Activated CD8-positive, alpha-beta T cell treated with anti-CD3 and anti-CD28 coated beads for 36 hours (primary cell): ENCODE measurements at regions of chr2 and their contacts with region 1.

Region 1: GRCh38 chr2:179020156-179020750 is 29.7 kb downstream of the CCDC141 start:
- DNase-seq: peak; percentile 75
- ATAC-seq: peak; percentile 94
- H3K4me3 Mint-ChIP-seq: no peak overlapping the region
- H3K27ac Mint-ChIP-seq: no peak overlapping the region
- H3K4me1 Mint-ChIP-seq: peaks cover 30% of the 10 kb centered on the region
- H3K27me3 Mint-ChIP-seq: no peaks in the 10 kb centered on the region
- CTCF ChIP-seq: peak; percentile 63

Region 2: GRCh38 chr2:178877874-178878273 is 142.4 kb before region 1 on chr2:
- CTCF ChIA-PET with region 1: no interaction called
- POLR2A ChIA-PET with region 1: no interaction called
- intact Hi-C with region 1: no loop called
- DNase-seq: no peak
- ATAC-seq: no peak
- H3K4me3 Mint-ChIP-seq: no peak overlapping the region
- H3K27ac Mint-ChIP-seq: no peak overlapping the region
- H3K4me1 Mint-ChIP-seq: no peaks in the 10 kb centered on the region
- H3K27me3 Mint-ChIP-seq: no peaks in the 10 kb centered on the region
- CTCF ChIP-seq: no peak

Region 3: DNA sequence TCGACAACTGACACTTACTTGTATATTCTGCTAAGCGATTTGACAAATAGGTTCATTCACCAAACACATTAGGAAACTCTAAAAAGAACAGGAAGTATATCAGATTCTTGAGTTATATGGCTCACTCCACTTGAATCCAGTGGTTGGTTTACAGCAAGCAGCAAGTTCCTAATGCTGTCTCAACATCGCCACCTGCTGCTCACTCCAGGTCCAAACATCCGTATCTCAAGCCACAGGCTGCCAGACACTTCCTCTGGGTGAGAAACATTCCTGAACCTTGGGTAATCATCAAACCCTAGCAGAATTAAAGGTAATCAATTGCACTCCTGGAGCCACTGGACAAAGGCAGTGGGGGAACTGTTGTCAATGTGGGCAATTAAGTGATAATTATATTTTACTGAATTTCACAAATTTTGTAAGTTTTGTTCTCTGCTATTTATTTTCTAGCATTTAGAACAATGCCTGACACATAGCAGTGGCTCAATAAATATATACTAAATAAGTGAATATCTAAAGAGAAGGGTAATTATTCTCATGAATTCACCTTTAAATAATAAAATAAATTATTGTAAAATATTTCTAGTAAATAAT is 105.9 kb before region 1 on chr2:
- CTCF ChIA-PET with region 1: interaction called, 36 read pairs
- POLR2A ChIA-PET with region 1: no interaction called
- intact Hi-C with region 1: no loop called
- DNase-seq: peak; percentile 89
- ATAC-seq: peak; percentile 92
- H3K4me3 Mint-ChIP-seq: no peak overlapping the region
- H3K27ac Mint-ChIP-seq: no peak overlapping the region
- H3K4me1 Mint-ChIP-seq: peaks cover 7% of the 10 kb centered on the region
- H3K27me3 Mint-ChIP-seq: no peaks in the 10 kb centered on the region
- CTCF ChIP-seq: peak; percentile 89

Region 4: DNA sequence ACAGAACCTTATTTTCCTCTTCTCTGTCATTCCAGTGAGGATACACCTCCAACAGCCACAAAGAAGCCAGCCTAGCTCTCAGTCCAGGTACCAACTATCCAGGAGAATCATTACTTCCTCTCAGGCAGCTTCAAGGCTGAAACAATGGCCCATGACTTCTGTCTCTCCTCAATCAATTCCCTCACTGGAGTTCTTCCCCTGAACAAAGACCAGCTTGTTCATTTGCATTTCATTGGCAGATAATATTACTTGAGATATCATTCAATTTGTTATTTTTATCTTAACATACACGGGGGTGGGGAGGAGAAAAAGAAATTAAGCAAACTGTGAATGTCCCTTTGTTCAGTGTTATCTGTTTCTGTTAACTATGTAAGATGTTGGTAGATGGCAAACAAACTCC is 14.3 kb before region 1 on chr2:
- CTCF ChIA-PET with region 1: interaction called, 24 read pairs
- POLR2A ChIA-PET with region 1: interaction called, 3 read pairs
- intact Hi-C with region 1: no loop called
- DNase-seq: no peak
- ATAC-seq: no peak
- H3K4me3 Mint-ChIP-seq: no peak overlapping the region
- H3K27ac Mint-ChIP-seq: no peak overlapping the region
- H3K4me1 Mint-ChIP-seq: no peaks in the 10 kb centered on the region
- H3K27me3 Mint-ChIP-seq: no peaks in the 10 kb centered on the region
- CTCF ChIP-seq: no peak

Region 5: GRCh38 chr2:179037807-179038206 is 17.6 kb after region 1 on chr2:
- CTCF ChIA-PET with region 1: interaction called, 13 read pairs
- POLR2A ChIA-PET with region 1: no interaction called
- intact Hi-C with region 1: no loop called
- DNase-seq: no peak
- ATAC-seq: peak; percentile 24
- H3K4me3 Mint-ChIP-seq: no peak overlapping the region
- H3K27ac Mint-ChIP-seq: no peak overlapping the region
- H3K4me1 Mint-ChIP-seq: peaks cover 30% of the 10 kb centered on the region
- H3K27me3 Mint-ChIP-seq: no peaks in the 10 kb centered on the region
- CTCF ChIP-seq: no peak

Region 6: DNA sequence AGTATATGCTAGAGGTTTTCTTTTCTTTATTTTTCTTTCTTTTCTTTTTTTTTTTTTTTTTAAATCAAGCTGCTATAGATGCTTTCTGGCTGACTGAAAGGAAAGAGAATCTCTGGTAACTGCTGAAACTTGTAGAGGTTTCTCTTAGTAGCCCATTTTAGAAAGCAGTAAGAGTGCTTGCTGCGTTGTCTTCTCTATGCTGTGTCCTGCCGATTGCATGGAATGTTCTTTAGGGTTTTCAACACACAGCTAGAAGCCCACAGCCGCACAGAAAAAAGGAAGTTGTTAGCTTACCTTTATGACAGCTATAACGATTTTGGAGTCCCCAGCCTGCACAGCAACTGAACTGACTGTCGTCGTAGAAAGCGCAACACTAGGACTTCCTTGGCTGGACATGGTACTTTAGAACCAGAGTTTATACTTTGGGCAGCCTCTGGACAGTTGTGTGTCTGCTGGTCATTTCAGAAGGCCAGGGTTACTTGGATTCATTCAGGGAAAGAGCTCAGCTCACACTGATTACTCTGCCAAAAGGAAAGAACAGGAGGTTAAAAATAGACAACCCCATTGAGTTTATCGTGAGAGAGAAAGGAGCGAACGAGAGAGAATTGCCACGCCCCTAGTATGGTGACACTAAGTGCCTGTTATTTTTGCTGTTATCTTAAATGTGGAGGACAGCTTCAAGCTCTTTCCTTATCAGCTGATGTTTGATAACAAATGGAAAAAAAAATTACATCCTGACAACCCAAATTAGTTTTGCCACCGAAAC is 29.5 kb after region 1 on chr2 and contains the start of gene CCDC141:
- CTCF ChIA-PET with region 1: interaction called, 11 read pairs
- POLR2A ChIA-PET with region 1: no interaction called
- intact Hi-C with region 1: no loop called
- DNase-seq: peak; percentile 56
- ATAC-seq: peak; percentile 70
- H3K4me3 Mint-ChIP-seq: peak within 1 kb of the TSS; percentile 83
- H3K27ac Mint-ChIP-seq: peak within 1 kb of the TSS; percentile 87
- H3K4me1 Mint-ChIP-seq: peaks cover 43% of the 10 kb centered on the region
- H3K27me3 Mint-ChIP-seq: no peaks in the 10 kb centered on the region
- CTCF ChIP-seq: no peak
- total RNA-seq, gene CCDC141: 6.5 to 7.8 TPM

Region 7: GRCh38 chr2:180033993-180034894 is 1014.0 kb after region 1 on chr2:
- CTCF ChIA-PET with region 1: no interaction called
- POLR2A ChIA-PET with region 1: no interaction called
- intact Hi-C with region 1: no loop called
- DNase-seq: no peak
- ATAC-seq: no peak
- H3K4me3 Mint-ChIP-seq: no peak overlapping the region
- H3K27ac Mint-ChIP-seq: no peak overlapping the region
- H3K4me1 Mint-ChIP-seq: no peaks in the 10 kb centered on the region
- H3K27me3 Mint-ChIP-seq: peaks cover 26% of the 10 kb centered on the region
- CTCF ChIP-seq: no peak